GM12878 (cell line): ENCODE measurements at regions of chr6 and their contacts with region 1.

Region 1: DNA sequence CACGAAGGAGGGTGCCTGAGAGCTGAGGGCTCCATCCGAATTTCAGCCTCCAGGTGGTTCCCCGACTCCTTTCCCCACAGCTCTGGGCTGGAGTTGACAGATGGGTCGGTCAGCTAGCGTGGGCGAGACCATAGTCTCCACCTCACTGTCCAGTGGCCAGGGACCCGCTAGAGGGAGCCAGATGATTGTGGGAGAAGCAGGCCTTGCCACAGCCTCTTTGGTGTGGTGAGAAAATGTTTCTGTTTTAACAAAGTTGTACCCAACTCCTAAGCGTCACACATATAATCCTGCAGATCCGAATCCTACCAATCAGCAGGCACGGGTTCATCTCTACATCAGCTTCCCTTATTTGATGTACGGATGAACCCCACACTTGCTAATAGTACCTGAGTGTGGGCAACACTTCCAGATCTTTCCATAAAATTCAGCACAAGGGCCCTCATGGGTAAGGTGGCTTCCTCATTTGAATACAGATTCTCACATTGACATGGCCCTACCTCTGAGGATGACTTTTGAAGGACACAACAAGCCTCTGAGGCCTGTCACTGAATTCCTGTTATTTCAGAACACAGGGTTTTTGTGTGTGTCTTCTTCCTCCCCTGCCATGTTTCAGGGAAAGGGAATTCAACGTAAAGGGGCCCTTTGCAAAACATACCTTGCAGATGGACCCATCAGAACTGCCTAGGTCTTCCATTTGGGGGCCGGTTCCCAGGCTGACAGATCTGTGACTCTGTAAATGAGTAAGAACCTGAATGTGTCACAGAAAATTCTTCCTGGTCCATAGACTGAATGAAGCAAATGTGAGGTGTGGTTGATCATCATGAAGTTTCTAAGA is 103.2 kb upstream of the DUSP22 start:
- DNase-seq: peak; percentile 94
- ATAC-seq: peak; percentile 90
- H3K4me3 ChIP-seq: no peak overlapping the region
- H3K27ac ChIP-seq: peak overlapping the region; percentile 98
- H3K4me1 ChIP-seq: peaks cover 72% of the 10 kb centered on the region
- H3K27me3 ChIP-seq: no peaks in the 10 kb centered on the region; a peak in 1 of 4 replicates
- CTCF ChIP-seq: peak; percentile 93 to 96 (median 95)
- EP300 ChIP-seq: peak; percentile 44 to 58; a peak in 3 of 4 replicates
- POLR2A ChIP-seq: no peak
- RAD21 ChIP-seq: peak; percentile 97

Region 2: DNA sequence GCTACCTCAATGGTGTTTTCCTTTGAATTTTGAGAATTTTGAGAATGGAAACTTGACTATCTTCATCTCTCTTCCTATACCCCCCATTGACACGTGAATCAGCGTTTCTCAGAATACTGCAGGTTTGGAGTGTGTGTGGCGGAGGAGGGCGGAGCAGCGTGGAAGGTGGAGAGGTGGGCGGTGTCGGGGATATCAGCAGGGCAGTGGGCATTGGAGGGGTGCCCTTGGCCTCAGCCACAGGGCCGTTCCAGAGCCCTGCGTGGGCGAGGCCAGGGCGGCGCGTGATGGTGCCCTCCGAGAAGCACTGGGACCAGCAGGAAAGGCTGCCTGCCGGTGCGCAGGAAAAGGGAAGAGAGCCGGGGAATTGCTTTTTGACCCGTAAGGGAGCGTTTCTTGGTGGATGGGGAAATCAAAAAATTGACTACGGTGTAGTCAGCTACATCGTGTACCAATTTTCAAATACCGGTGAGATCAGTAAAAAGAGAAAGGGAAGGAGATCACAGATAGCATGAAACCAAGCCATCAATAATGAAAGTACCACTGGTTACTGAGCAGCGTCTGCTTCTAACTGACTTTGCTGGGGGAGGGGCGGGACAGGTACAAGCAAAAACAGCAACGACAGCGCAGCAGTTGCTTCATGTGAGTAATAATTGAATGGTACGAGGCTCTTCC is 20.5 kb after region 1 on chr6:
- CTCF ChIA-PET with region 1: interaction called, 5 read pairs
- POLR2A ChIA-PET with region 1: interaction called, 3 read pairs
- RAD21 ChIA-PET with region 1: interaction called, 519 read pairs
- SMC1A ChIA-PET with region 1: interaction called, 748 read pairs
- in situ Hi-C with region 1: no loop called
- intact Hi-C with region 1: no loop called
- DNase-seq: peak; percentile 68
- ATAC-seq: peak; percentile 95
- H3K4me3 ChIP-seq: peak overlapping the region; percentile 28; the same call in 1 of the 2 replicates
- H3K27ac ChIP-seq: peak overlapping the region; percentile 75
- H3K4me1 ChIP-seq: peaks cover 49% of the 10 kb centered on the region
- H3K27me3 ChIP-seq: no peaks in the 10 kb centered on the region; a peak in 1 of 4 replicates
- CTCF ChIP-seq: no peak
- EP300 ChIP-seq: no peak
- POLR2A ChIP-seq: no peak
- RAD21 ChIP-seq: 0 out of 2 replicates have a peak, but pooled peaks have one; percentile 2

Region 3: GRCh38 chr6:291697-292505 is 102.9 kb after region 1 on chr6 and contains the start of gene DUSP22:
- CTCF ChIA-PET with region 1: interaction called, 20 read pairs
- POLR2A ChIA-PET with region 1: interaction called, 3 read pairs
- RAD21 ChIA-PET with region 1: interaction called, 16 read pairs
- SMC1A ChIA-PET with region 1: interaction called, 16 read pairs
- in situ Hi-C with region 1: no loop called
- intact Hi-C with region 1: loop called (anchors 1 kb)
- DNase-seq: peak; percentile 81
- ATAC-seq: peak; percentile 45
- H3K4me3 ChIP-seq: peak within 1 kb of the TSS; percentile 78
- H3K27ac ChIP-seq: peak within 1 kb of the TSS; percentile 100
- H3K4me1 ChIP-seq: peaks cover 64% of the 10 kb centered on the region
- H3K27me3 ChIP-seq: no peaks in the 10 kb centered on the region
- CTCF ChIP-seq: no peak
- EP300 ChIP-seq: peak; percentile 53 to 76; a peak in 2 of 4 replicates
- POLR2A ChIP-seq: no peak
- RAD21 ChIP-seq: peak; percentile 42
- polyA plus RNA-seq, gene DUSP22: 93.4 to 99.7 TPM

Region 4: GRCh38 chr6:336159-337019 is 147.4 kb after region 1 on chr6:
- CTCF ChIA-PET with region 1: interaction called, 26 read pairs
- POLR2A ChIA-PET with region 1: interaction called, 3 read pairs
- RAD21 ChIA-PET with region 1: interaction called, 9 read pairs
- SMC1A ChIA-PET with region 1: interaction called, 5 read pairs
- in situ Hi-C with region 1: no loop called
- intact Hi-C with region 1: no loop called
- DNase-seq: peak; percentile 88
- ATAC-seq: peak; percentile 12
- H3K4me3 ChIP-seq: peak overlapping the region; percentile 11; the same call in 1 of the 2 replicates
- H3K27ac ChIP-seq: peak overlapping the region; percentile 86
- H3K4me1 ChIP-seq: peaks cover 86% of the 10 kb centered on the region
- H3K27me3 ChIP-seq: no peaks in the 10 kb centered on the region
- CTCF ChIP-seq: no peak
- EP300 ChIP-seq: 0 out of 4 replicates have a peak, but pooled peaks of 1 of the 2 experiments have one; percentile 30
- POLR2A ChIP-seq: no peak
- RAD21 ChIP-seq: 0 out of 2 replicates have a peak, but pooled peaks have one; percentile 21

Region 5: DNA sequence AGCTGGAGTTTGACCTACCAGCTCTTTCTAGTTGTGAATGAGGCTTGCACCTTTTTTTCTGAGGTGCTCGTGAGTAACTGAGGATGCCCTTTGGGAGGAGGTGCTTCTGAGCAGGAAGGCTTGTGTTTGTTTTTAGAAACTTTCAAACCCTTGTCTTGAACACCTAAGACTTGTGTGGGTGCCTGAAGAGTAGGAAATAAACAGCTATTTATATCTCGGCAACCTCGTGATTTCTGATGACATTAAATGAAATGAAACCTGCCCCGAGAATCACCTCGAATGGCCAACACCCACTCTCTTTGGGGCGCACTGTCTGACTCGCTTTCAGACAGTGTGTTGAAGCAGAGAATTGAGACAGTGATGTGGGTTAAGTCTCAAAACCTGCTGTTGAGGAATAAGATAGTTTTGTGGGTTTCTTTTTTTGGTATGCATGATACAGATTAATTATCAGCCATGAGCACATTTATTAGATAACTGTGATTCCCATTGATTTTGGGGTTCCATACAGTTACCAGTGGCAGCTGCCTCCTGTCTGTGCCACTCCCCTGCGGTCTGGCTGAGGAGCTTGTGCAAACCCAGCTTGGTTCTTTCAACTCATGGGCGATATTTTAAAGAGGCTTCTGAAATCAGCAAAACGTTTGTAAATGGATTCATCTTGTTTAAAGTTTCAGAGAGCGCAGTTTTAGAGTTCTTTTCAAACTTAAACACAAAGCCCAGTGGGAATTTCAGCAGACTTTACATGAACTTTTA is 210.9 kb after region 1 on chr6:
- CTCF ChIA-PET with region 1: interaction called, 33 read pairs
- POLR2A ChIA-PET with region 1: interaction called, 3 read pairs
- RAD21 ChIA-PET with region 1: interaction called, 16 read pairs
- SMC1A ChIA-PET with region 1: interaction called, 41 read pairs
- in situ Hi-C with region 1: loop called (anchors 5 kb)
- intact Hi-C with region 1: no loop called
- DNase-seq: no peak
- ATAC-seq: peak; percentile 10
- H3K4me3 ChIP-seq: peak overlapping the region; percentile 61
- H3K27ac ChIP-seq: peak overlapping the region; percentile 39
- H3K4me1 ChIP-seq: peaks cover 35% of the 10 kb centered on the region
- H3K27me3 ChIP-seq: no peaks in the 10 kb centered on the region
- CTCF ChIP-seq: no peak
- EP300 ChIP-seq: peak; percentile 56 to 84; a peak in 2 of 4 replicates
- POLR2A ChIP-seq: peak; percentile 89
- RAD21 ChIP-seq: 0 out of 2 replicates have a peak, but pooled peaks have one; percentile 1

Region 6: GRCh38 chr6:593139-593906 is 404.3 kb after region 1 on chr6:
- CTCF ChIA-PET with region 1: interaction called, 26 read pairs
- POLR2A ChIA-PET with region 1: no interaction called
- RAD21 ChIA-PET with region 1: interaction called, 12 read pairs
- SMC1A ChIA-PET with region 1: interaction called, 10 read pairs
- in situ Hi-C with region 1: no loop called
- intact Hi-C with region 1: loop called (anchors 2 kb)
- DNase-seq: peak; percentile 13
- ATAC-seq: peak; percentile 85
- H3K4me3 ChIP-seq: no peak overlapping the region
- H3K27ac ChIP-seq: no peak overlapping the region
- H3K4me1 ChIP-seq: no peaks in the 10 kb centered on the region
- H3K27me3 ChIP-seq: no peaks in the 10 kb centered on the region
- CTCF ChIP-seq: peak; percentile 38 to 67 (median 42); a peak in 5 of 6 replicates
- EP300 ChIP-seq: no peak
- POLR2A ChIP-seq: no peak
- RAD21 ChIP-seq: peak; percentile 81